Mammary epithelial cell (primary cell): ENCODE measurements at regions of chr22 and their contacts with region 1.

Region 1: GRCh38 chr22:17284888-17285287 is 65.7 kb upstream of the ADA2 start:
- DNase-seq: no peak
- H3K4me3 ChIP-seq: no peak overlapping the region
- H3K27ac ChIP-seq: no peak overlapping the region
- H3K4me1 ChIP-seq: no peaks in the 10 kb centered on the region
- H3K27me3 ChIP-seq: no peaks in the 10 kb centered on the region
- CTCF ChIP-seq: no peak

Region 2: GRCh38 chr22:17303441-17303839 is 18.6 kb after region 1 on chr22:
- CTCF ChIA-PET with region 1: no interaction called
- dilution Hi-C with region 1: no loop called
- in situ Hi-C with region 1: no loop called
- intact Hi-C with region 1: loop called (anchors 1 kb)
- DNase-seq: no peak
- H3K4me3 ChIP-seq: no peak overlapping the region
- H3K27ac ChIP-seq: no peak overlapping the region
- H3K4me1 ChIP-seq: no peaks in the 10 kb centered on the region
- H3K27me3 ChIP-seq: no peaks in the 10 kb centered on the region
- CTCF ChIP-seq: no peak